Activated naive CD4-positive, alpha-beta T cell treated with anti-CD3 and anti-CD28 coated beads, Interleukin-2, amount 10 ng/mL, durations not matched to agents 7 days and 5 days (primary cell): ENCODE measurements at regions of chr1 and their contacts with region 1.

Region 1: DNA sequence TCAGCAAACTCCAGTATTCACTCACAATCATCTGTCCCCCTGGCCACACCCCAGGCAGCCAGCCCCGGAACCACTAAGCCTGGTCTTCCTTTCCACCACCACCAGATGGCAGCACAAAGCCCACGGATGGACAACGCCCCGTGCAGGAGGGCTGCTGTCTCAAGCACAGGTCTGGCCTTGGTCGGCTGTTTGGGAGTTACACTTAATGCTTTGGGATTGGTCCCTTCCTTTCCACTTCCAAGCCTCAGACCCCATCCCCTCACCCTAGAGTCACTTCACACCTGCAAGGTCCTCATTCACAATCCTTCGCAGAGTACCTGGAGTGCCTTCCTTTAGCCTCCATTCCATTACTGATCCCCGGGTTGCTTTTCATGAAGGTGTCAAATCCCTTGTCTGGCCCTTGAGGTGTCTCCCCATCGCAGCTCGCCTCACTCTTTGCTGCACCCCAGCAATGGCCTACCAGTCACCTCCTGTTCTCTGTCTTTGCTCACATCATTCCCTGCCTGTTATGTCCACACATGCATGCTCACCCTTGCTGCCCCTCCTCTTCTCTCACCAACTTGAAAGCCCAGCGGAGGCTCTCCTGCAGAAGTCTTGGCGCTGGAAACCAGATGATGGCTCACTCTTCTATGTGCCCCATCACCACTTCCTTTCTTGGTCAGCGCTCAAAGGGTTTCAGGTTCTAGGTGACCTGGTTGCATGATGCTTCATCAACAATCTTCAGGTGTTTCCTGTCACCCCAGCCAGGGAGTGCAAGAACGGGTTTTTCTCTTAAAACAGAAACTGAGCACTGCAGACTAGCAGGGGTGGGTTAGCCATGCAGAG is 24.9 kb upstream of the KCNA2 start:
- DNase-seq: peak; percentile 91
- H3K4me3 Mint-ChIP-seq: no peak overlapping the region
- H3K27ac Mint-ChIP-seq: no peak overlapping the region
- H3K4me1 Mint-ChIP-seq: peaks cover 35% of the 10 kb centered on the region
- H3K27me3 Mint-ChIP-seq: no peaks in the 10 kb centered on the region

Region 2: GRCh38 chr1:110645821-110646735 is 15.0 kb after region 1 on chr1:
- CTCF ChIA-PET with region 1: interaction called, 59 read pairs
- DNase-seq: no peak
- H3K4me3 Mint-ChIP-seq: no peak overlapping the region
- H3K27ac Mint-ChIP-seq: peak overlapping the region; percentile 24
- H3K4me1 Mint-ChIP-seq: peaks cover 47% of the 10 kb centered on the region
- H3K27me3 Mint-ChIP-seq: no peaks in the 10 kb centered on the region

Region 3: GRCh38 chr1:110668549-110668948 is 37.5 kb after region 1 on chr1:
- CTCF ChIA-PET with region 1: interaction called, 17 read pairs
- DNase-seq: peak; percentile 25
- H3K4me3 Mint-ChIP-seq: peak overlapping the region; percentile 76
- H3K27ac Mint-ChIP-seq: peak overlapping the region; percentile 92
- H3K4me1 Mint-ChIP-seq: peaks cover 19% of the 10 kb centered on the region
- H3K27me3 Mint-ChIP-seq: peaks cover 5% of the 10 kb centered on the region

Region 4: GRCh38 chr1:110674337-110675059 is 43.4 kb after region 1 on chr1 and contains the start of gene KCNA3:
- CTCF ChIA-PET with region 1: interaction called, 17 read pairs
- DNase-seq: peak; percentile 82
- H3K4me3 Mint-ChIP-seq: peak within 1 kb of the TSS; percentile 95
- H3K27ac Mint-ChIP-seq: peak within 1 kb of the TSS; percentile 98
- H3K4me1 Mint-ChIP-seq: peaks cover 41% of the 10 kb centered on the region
- H3K27me3 Mint-ChIP-seq: peaks cover 10% of the 10 kb centered on the region

Region 5: GRCh38 chr1:110859062-110859461 is 228.0 kb after region 1 on chr1:
- CTCF ChIA-PET with region 1: no interaction called
- DNase-seq: no peak
- H3K4me3 Mint-ChIP-seq: no peak overlapping the region
- H3K27ac Mint-ChIP-seq: no peak overlapping the region
- H3K4me1 Mint-ChIP-seq: peaks cover 11% of the 10 kb centered on the region
- H3K27me3 Mint-ChIP-seq: peaks cover 7% of the 10 kb centered on the region